ENCODE measurements at regions of chr7 and their contacts with region 1.

Region 1: DNA sequence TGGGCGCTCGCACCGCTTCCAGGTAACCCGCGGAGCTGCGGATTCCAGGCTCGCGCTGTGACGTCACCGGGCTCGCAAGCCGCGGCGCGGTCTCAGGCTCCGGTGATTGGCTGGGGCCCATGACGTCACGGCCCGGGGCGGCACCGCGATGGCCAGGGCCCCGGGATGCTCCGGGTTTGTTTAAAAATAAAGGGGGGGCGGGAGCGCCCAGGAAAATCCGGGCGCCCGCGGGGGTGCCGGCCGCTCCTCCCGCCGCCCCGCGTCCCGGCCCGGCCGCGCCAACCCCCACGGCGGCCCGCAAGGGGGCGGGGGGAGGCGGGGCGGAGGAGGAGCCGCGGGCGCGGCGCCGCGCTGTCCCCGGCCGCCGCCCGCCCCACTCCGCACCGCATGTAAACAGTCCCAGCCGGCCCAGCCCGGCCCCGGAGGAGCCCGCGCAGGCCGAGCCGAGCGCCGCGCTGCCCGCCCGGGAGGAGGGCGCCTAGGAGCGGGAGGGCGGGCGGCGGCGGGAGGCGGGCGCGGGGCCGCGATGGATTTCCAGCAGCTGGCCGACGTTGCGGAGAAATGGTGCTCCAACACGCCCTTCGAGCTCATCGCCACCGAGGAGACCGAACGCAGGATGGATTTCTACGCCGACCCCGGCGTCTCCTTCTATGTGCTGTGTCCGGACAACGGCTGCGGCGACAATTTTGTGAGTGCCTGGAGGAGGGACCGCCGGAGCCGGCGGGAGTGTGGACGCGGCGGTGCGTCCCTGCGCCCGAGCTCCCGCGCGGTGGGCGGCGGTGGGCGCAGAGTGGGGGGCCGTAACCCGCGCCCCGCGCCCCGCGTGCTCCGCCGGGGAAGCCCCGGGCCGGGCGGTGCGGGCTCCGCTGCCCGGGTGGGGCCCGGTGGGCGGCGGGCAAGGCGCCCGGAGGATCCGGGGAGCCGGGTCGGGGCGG is at the start of gene MTURN:
- DNase-seq: peak; percentile 68 to 95 (median 86)
- ATAC-seq: peak; percentile 80
- H3K4me3 ChIP-seq: peak within 1 kb of the TSS; percentile 74 to 78
- H3K4me3 Mint-ChIP-seq: peak within 1 kb of the TSS; percentile 91
- H3K27ac ChIP-seq: peak within 1 kb of the TSS; percentile 4 to 49
- H3K27ac Mint-ChIP-seq: peak within 1 kb of the TSS; percentile 90
- H3K4me1 ChIP-seq: peaks cover 15% of the 10 kb centered on the region
- H3K4me1 Mint-ChIP-seq: peaks cover 11% of the 10 kb centered on the region
- H3K27me3 ChIP-seq: no peaks in the 10 kb centered on the region
- H3K27me3 Mint-ChIP-seq: no peaks in the 10 kb centered on the region
- CTCF ChIP-seq: no peak
- total RNA-seq, gene MTURN: 16.1 to 19.7 TPM

Region 2: DNA sequence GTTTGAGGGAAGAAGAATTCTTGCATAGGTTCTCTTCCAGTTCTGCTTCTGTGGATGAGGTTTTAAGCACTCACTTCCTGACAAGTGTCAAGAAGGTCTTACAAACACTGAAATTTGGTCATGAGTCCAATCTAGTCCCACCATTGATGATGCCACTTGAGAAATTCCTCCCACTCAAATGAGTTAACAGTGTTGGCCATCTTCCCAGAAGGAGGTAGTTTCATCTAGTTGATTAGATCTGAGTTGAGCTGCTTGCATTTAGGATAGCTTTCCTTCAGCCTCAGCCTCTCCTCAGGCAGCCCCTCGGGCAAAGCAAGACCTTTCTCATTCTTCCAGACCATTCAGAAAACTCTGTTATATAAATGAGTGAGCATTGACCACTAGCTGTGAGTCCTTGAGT is 1366.2 kb before region 1 on chr7:
- CTCF ChIA-PET with region 1: no interaction called
- POLR2A ChIA-PET with region 1: no interaction called
- intact Hi-C with region 1: no loop called
- DNase-seq: no peak
- ATAC-seq: no peak
- H3K4me3 ChIP-seq: no peak overlapping the region
- H3K4me3 Mint-ChIP-seq: no peak overlapping the region
- H3K27ac ChIP-seq: no peak overlapping the region
- H3K27ac Mint-ChIP-seq: no peak overlapping the region
- H3K4me1 ChIP-seq: no peaks in the 10 kb centered on the region
- H3K4me1 Mint-ChIP-seq: no peaks in the 10 kb centered on the region
- H3K27me3 ChIP-seq: no peaks in the 10 kb centered on the region
- H3K27me3 Mint-ChIP-seq: peaks cover 8% of the 10 kb centered on the region
- CTCF ChIP-seq: no peak

Region 3: GRCh38 chr7:28808796-28809527 is 1325.9 kb before region 1 on chr7:
- CTCF ChIA-PET with region 1: no interaction called
- POLR2A ChIA-PET with region 1: no interaction called
- intact Hi-C with region 1: no loop called
- DNase-seq: peak in 1 of 9 experiments; percentile 2
- ATAC-seq: no peak
- H3K4me3 ChIP-seq: no peak overlapping the region
- H3K4me3 Mint-ChIP-seq: no peak overlapping the region
- H3K27ac ChIP-seq: no peak overlapping the region
- H3K27ac Mint-ChIP-seq: no peak overlapping the region
- H3K4me1 ChIP-seq: no peaks in the 10 kb centered on the region
- H3K4me1 Mint-ChIP-seq: no peaks in the 10 kb centered on the region
- H3K27me3 ChIP-seq: no peaks in the 10 kb centered on the region
- H3K27me3 Mint-ChIP-seq: peaks cover 4% of the 10 kb centered on the region
- CTCF ChIP-seq: no peak

Region 4: DNA sequence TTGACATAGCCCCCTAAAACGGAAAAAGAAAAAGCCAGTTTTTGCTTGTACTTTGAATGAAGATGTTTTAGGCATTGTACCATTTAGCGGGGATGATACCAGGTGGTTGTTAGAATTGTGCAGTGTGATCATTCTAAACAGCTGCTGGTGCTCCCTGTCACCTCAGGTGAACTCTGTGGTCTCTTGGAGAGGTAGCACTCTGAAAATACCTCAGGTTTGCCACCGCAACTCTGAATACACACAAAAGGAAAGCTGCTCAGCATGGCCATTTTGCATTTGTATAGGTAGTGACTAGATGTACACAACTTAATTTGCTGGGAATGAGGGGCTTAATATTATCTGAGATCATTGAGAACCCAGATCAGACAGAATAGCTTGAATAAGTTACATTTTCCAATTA is 54.1 kb before region 1 on chr7:
- CTCF ChIA-PET with region 1: no interaction called
- POLR2A ChIA-PET with region 1: no interaction called
- intact Hi-C with region 1: no loop called
- DNase-seq: no peak
- ATAC-seq: no peak
- H3K4me3 ChIP-seq: no peak overlapping the region
- H3K4me3 Mint-ChIP-seq: no peak overlapping the region
- H3K27ac ChIP-seq: no peak overlapping the region
- H3K27ac Mint-ChIP-seq: no peak overlapping the region
- H3K4me1 ChIP-seq: no peaks in the 10 kb centered on the region
- H3K4me1 Mint-ChIP-seq: no peaks in the 10 kb centered on the region
- H3K27me3 ChIP-seq: no peaks in the 10 kb centered on the region
- H3K27me3 Mint-ChIP-seq: no peaks in the 10 kb centered on the region
- CTCF ChIP-seq: no peak

Region 5: GRCh38 chr7:30148951-30149471 is 14.1 kb after region 1 on chr7:
- CTCF ChIA-PET with region 1: interaction called, 5 read pairs
- POLR2A ChIA-PET with region 1: interaction called, 7 read pairs
- intact Hi-C with region 1: loop called in 1 of 2 experiments (anchors 2 kb)
- DNase-seq: peak in 6 of 9 experiments; percentile 30 to 72 (median 54)
- ATAC-seq: peak; percentile 83
- H3K4me3 ChIP-seq: peak overlapping the region; percentile 9 to 41
- H3K4me3 Mint-ChIP-seq: no peak overlapping the region
- H3K27ac ChIP-seq: no peak overlapping the region
- H3K27ac Mint-ChIP-seq: peak overlapping the region; percentile 64
- H3K4me1 ChIP-seq: peaks cover 15% of the 10 kb centered on the region
- H3K4me1 Mint-ChIP-seq: peaks cover 3% of the 10 kb centered on the region
- H3K27me3 ChIP-seq: no peaks in the 10 kb centered on the region
- H3K27me3 Mint-ChIP-seq: no peaks in the 10 kb centered on the region
- CTCF ChIP-seq: no peak

Region 6: DNA sequence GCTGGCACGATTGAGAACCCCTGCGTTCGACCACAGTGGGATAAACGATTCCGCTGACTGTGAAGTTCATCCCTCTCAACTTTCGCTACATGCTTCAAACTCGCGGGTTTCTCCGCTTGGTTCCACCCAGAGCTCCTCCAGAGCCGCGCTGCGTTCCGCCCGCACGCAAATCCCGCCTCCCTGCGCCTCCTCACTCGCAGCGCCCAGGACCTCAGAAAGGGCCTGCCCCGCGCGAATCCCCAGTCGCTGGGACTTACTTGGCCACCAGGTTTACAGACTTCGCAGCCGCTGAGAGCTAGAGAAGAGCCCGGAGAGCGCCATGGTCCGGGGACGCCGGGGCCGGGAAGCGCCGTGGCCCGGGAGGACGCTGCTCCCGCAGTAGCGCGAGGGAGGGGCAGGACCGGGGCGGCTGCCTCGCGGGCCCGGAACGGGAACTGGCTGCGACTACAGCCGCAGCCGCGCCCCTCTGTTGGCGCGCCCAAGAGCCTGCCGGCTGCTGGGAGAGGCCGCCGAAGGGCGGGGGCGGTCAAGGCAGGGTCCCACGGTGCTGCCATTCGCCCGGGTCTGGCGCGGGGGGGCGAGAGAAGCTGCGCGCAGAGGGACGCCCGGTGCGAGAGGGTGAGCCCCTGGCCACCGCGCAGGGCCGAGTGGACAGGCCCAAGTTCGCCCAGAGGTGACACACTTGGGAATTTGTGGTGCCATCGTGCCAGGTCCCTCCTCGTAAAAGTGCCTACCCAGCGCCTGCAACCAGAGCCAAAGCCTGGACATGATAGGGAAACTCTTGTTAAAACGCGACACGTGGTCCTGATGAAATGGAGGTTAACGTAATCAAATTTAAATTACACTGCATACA is 343.7 kb after region 1 on chr7 and contains the start of gene NOD1:
- CTCF ChIA-PET with region 1: no interaction called
- POLR2A ChIA-PET with region 1: no interaction called
- intact Hi-C with region 1: loop called in 1 of 2 experiments (anchors 10 kb)
- DNase-seq: peak; percentile 13 to 81 (median 63)
- ATAC-seq: peak; percentile 81
- H3K4me3 ChIP-seq: peak within 1 kb of the TSS; percentile 68 to 80
- H3K4me3 Mint-ChIP-seq: peak within 1 kb of the TSS; percentile 95
- H3K27ac ChIP-seq: peak within 1 kb of the TSS; percentile 62 to 70
- H3K27ac Mint-ChIP-seq: peak within 1 kb of the TSS; percentile 89
- H3K4me1 ChIP-seq: peaks cover 11% of the 10 kb centered on the region
- H3K4me1 Mint-ChIP-seq: peaks cover 57% of the 10 kb centered on the region
- H3K27me3 ChIP-seq: no peaks in the 10 kb centered on the region
- H3K27me3 Mint-ChIP-seq: no peaks in the 10 kb centered on the region
- CTCF ChIP-seq: no peak
- total RNA-seq, gene NOD1: 8.4 to 11.1 TPM

Region 7: DNA sequence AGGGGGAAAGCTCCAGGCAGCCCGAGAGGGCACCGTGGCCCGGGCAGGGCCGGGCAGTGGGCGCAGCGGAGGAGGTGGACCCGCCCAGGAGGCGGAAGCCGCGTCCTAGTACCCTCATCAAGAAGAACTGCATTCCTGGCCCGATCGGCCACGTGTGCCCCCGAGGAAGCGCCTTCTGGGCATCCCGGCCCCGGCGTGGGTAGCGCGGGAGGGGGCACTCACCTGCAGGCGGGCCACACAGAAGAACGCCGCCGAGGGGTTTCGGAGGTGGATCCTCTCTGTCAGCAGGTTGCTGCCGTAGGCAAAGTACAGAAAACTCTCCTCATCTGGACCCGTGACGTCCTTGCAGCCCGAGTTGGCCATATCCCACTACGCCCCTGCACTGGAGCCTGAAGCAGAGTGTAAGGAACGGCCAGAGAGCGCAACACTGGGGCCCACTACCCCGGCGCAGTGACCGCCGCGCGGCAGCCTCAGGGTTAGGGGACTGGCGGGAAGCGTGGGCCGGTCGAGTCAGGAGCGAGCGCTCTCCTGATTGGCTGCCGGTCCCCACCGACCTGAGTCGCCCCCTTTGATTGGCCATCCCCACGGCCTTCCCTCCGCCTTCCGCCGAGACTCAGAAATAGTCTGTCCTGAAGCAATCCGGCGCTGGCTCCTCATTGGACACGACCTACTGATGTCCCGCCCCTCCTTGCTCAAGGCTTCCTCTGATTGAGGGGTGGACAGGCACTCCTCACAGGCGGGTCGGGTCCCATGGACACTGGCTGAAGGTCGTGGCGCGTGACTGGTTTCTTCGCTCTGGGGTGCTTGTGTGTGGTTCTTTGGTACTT is 369.7 kb after region 1 on chr7 and contains the start of gene GGCT:
- CTCF ChIA-PET with region 1: interaction called, 3 read pairs
- POLR2A ChIA-PET with region 1: no interaction called
- intact Hi-C with region 1: loop called (anchors 5 to 10 kb)
- DNase-seq: peak; percentile 90 to 98 (median 96)
- ATAC-seq: peak; percentile 97
- H3K4me3 ChIP-seq: peak within 1 kb of the TSS; percentile 80 to 98
- H3K4me3 Mint-ChIP-seq: peak within 1 kb of the TSS; percentile 95
- H3K27ac ChIP-seq: peak within 1 kb of the TSS; percentile 50 to 70
- H3K27ac Mint-ChIP-seq: peak within 1 kb of the TSS; percentile 94
- H3K4me1 ChIP-seq: peaks cover 23% of the 10 kb centered on the region
- H3K4me1 Mint-ChIP-seq: peaks cover 39% of the 10 kb centered on the region
- H3K27me3 ChIP-seq: no peaks in the 10 kb centered on the region
- H3K27me3 Mint-ChIP-seq: no peaks in the 10 kb centered on the region
- CTCF ChIP-seq: no peak
- total RNA-seq, gene GGCT: 5.9 to 6.1 TPM

Region 8: GRCh38 chr7:30727061-30727945 is 592.4 kb after region 1 on chr7:
- CTCF ChIA-PET with region 1: no interaction called
- POLR2A ChIA-PET with region 1: no interaction called
- intact Hi-C with region 1: loop called in 1 of 2 experiments (anchors 10 kb)
- DNase-seq: peak; percentile 21 to 83 (median 64)
- ATAC-seq: peak; percentile 91
- H3K4me3 ChIP-seq: peak overlapping the region; percentile 49 to 53
- H3K4me3 Mint-ChIP-seq: peak overlapping the region; percentile 85
- H3K27ac ChIP-seq: peak overlapping the region; percentile 55 to 68
- H3K27ac Mint-ChIP-seq: peak overlapping the region; percentile 94
- H3K4me1 ChIP-seq: peaks cover 49% of the 10 kb centered on the region
- H3K4me1 Mint-ChIP-seq: peaks cover 75% of the 10 kb centered on the region
- H3K27me3 ChIP-seq: no peaks in the 10 kb centered on the region
- H3K27me3 Mint-ChIP-seq: no peaks in the 10 kb centered on the region
- CTCF ChIP-seq: no peak